GM12878 (cell line): ENCODE measurements at regions of chr16 and their contacts with region 1.

Region 1: DNA sequence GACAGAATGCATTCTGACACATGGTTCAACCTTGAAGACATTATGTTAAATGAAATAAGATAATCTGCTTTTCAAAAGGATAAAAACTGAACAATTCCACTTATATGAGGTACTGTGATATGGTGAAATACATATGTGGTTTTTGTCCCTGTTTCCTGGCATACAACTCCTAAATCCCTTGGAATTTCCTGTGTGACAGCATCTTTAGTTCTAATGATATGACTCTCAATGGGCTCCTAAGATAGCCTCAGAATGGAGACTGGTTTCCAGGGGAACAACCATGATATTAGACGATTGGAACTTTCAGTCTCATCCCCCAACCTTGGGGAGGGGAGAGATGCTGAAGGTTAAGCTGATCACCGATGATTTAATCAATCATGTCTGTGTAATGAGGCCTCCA is 37.7 kb upstream of the PHLPP2 start:
- DNase-seq: no peak
- ATAC-seq: no peak
- H3K4me3 ChIP-seq: no peak overlapping the region
- H3K27ac ChIP-seq: no peak overlapping the region
- H3K4me1 ChIP-seq: no peaks in the 10 kb centered on the region
- H3K27me3 ChIP-seq: no peaks in the 10 kb centered on the region
- CTCF ChIP-seq: no peak
- EP300 ChIP-seq: no peak
- POLR2A ChIP-seq: no peak
- RAD21 ChIP-seq: no peak

Region 2: GRCh38 chr16:71693164-71693563 is 69.0 kb before region 1 on chr16:
- CTCF ChIA-PET with region 1: no interaction called
- POLR2A ChIA-PET with region 1: no interaction called
- RAD21 ChIA-PET with region 1: no interaction called
- SMC1A ChIA-PET with region 1: no interaction called
- in situ Hi-C with region 1: no loop called
- intact Hi-C with region 1: loop called (anchors 10 kb)
- DNase-seq: no peak
- ATAC-seq: no peak
- H3K4me3 ChIP-seq: no peak overlapping the region
- H3K27ac ChIP-seq: no peak overlapping the region
- H3K4me1 ChIP-seq: no peaks in the 10 kb centered on the region
- H3K27me3 ChIP-seq: no peaks in the 10 kb centered on the region
- CTCF ChIP-seq: no peak
- EP300 ChIP-seq: no peak
- POLR2A ChIP-seq: no peak
- RAD21 ChIP-seq: no peak